T-cell (primary cell): ENCODE measurements at regions of chr16 and their contacts with region 1.

Region 1: GRCh38 chr16:21638573-21638975 is 13.8 kb downstream of the IGSF6 start:
- DNase-seq: peak in 1 of 35 experiments; percentile 40
- ATAC-seq: peak; percentile 50 to 68 (median 62)
- H3K4me3 ChIP-seq: no peak overlapping the region
- H3K4me3 Mint-ChIP-seq: no peak overlapping the region
- H3K27ac ChIP-seq: peak overlapping the region; percentile 51
- H3K27ac Mint-ChIP-seq: peak overlapping the region; percentile 87 to 88
- H3K4me1 ChIP-seq: peaks cover 12 to 25% of the 10 kb centered on the region in 2 experiments
- H3K4me1 Mint-ChIP-seq: peaks cover 20 to 33% (median 31%) of the 10 kb centered on the region in 3 donors
- H3K27me3 ChIP-seq: no peaks in the 10 kb centered on the region
- H3K27me3 Mint-ChIP-seq: no peaks in the 10 kb centered on the region

Region 2: GRCh38 chr16:21584817-21585216 is 53.8 kb before region 1 on chr16:
- CTCF ChIA-PET with region 1: interaction called, 3 to 10 read pairs
- POLR2A ChIA-PET with region 1: interaction called in 1 of 2 experiments, 3 read pairs
- DNase-seq: no peak
- ATAC-seq: no peak
- H3K4me3 ChIP-seq: no peak overlapping the region
- H3K4me3 Mint-ChIP-seq: no peak overlapping the region
- H3K27ac ChIP-seq: no peak overlapping the region
- H3K27ac Mint-ChIP-seq: no peak overlapping the region
- H3K4me1 ChIP-seq: peaks cover 0 to 5% of the 10 kb centered on the region in 2 experiments
- H3K4me1 Mint-ChIP-seq: peaks cover 1 to 6% (median 4%) of the 10 kb centered on the region in 3 donors
- H3K27me3 ChIP-seq: no peaks in the 10 kb centered on the region
- H3K27me3 Mint-ChIP-seq: peaks cover 0 to 2% of the 10 kb centered on the region in 2 donors